ENCODE measurements at regions of chr3 and their contacts with region 1.

Region 1: GRCh38 chr3:171162986-171163723 is 136.6 kb upstream of the SLC2A2 start:
- DNase-seq: peak; percentile 25
- ATAC-seq: no peak
- H3K4me3 Mint-ChIP-seq: no peak overlapping the region
- H3K27ac Mint-ChIP-seq: no peak overlapping the region
- H3K4me1 Mint-ChIP-seq: peaks cover 28% of the 10 kb centered on the region
- H3K27me3 Mint-ChIP-seq: no peaks in the 10 kb centered on the region

Region 2: DNA sequence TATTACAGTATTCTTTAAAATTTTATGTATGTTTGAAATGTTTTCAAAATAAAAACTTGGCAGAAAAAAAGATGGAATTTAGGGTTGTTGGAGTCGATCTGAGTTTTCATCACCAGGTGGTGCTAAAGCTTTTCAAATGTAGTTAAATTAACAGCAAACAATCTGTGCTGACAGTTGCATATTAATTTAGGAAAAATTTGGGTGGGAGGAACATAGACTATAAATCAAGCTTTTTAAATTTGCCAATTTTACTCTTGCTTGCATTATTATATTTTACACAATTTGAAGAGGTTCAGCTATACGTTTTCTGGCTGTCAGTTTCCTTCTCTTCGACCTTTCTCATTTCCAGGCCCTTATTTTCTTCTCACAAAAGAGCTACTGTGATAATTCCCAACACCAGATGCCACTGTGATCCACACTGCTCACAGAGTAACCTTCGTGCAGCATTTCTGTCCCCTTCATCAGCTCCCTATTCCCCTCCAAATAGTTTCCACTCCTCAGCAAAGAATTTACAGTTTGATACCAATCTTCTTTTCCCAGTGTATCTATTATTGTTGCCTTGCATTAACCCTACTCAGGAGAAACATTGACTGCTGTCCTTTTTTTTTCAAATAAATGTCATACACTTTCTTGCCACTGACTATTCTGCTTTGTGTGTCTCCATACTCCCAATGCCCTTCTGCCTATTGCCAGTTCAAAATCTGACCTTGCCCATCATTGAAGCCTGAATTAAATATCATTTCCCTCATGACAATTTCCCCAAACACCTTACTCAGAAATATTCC is 201.3 kb before region 1 on chr3:
- CTCF ChIA-PET with region 1: interaction called, 3 read pairs
- POLR2A ChIA-PET with region 1: no interaction called
- intact Hi-C with region 1: loop called in 1 of 2 experiments (anchors 5 kb)
- DNase-seq: peak; percentile 7
- ATAC-seq: no peak
- H3K4me3 Mint-ChIP-seq: no peak overlapping the region
- H3K27ac Mint-ChIP-seq: no peak overlapping the region
- H3K4me1 Mint-ChIP-seq: no peaks in the 10 kb centered on the region
- H3K27me3 Mint-ChIP-seq: peaks cover 2% of the 10 kb centered on the region

Region 3: DNA sequence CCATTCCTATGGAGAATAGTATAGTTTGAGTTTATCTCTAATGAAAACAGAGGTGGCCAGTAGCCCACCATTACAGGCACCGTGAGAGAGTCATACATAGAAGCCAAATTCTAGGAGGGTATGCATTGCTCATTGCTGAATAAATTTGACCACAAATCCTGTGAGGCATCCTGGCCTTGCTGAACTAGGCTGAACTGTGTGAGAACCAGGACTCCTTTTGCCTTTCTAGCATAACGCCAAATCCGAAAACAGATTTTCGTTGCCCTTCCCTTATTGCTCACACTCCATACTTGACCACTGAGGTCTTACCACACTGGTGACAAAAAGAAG is 187.0 kb before region 1 on chr3:
- CTCF ChIA-PET with region 1: no interaction called
- POLR2A ChIA-PET with region 1: no interaction called
- intact Hi-C with region 1: no loop called
- DNase-seq: no peak
- ATAC-seq: no peak
- H3K4me3 Mint-ChIP-seq: no peak overlapping the region
- H3K27ac Mint-ChIP-seq: no peak overlapping the region
- H3K4me1 Mint-ChIP-seq: no peaks in the 10 kb centered on the region
- H3K27me3 Mint-ChIP-seq: peaks cover 19% of the 10 kb centered on the region

Region 4: DNA sequence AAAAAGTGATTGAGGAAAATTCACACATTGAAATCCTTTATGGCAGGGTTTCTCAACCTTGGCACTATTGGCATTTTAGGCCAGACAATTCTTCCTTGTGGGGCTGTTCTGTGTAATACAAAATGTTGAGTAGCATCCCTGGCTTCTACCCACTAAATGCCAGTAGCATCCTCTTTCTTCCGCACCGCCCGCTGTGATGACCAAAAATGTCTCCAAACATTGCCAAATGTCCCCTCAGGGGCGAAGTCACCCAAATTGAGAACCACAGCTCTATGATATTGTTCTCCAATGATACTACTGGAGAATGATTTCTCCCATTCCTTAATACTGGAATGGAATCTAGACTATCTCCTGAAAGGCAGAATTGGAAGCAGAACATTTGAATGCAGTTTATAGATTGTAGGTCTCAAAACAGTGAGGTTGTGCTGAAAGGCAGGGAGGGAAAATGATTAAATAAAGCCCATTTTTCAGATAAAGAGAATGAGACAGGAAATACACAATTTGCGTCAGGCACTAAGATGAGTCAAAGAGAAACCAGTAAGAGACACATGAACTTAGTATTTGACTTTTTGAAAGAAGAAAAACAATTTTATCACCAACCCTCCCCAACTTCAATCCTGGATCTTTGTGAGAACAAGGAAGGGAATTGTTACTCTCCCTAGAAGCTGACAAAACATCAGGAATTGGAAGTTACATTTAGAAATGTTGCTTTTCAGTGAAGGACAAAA is 398.6 kb after region 1 on chr3:
- CTCF ChIA-PET with region 1: interaction called, 22 read pairs
- POLR2A ChIA-PET with region 1: no interaction called
- intact Hi-C with region 1: no loop called
- DNase-seq: peak; percentile 17
- ATAC-seq: peak; percentile 73
- H3K4me3 Mint-ChIP-seq: peak overlapping the region; percentile 58
- H3K27ac Mint-ChIP-seq: peak overlapping the region; percentile 94
- H3K4me1 Mint-ChIP-seq: peaks cover 36% of the 10 kb centered on the region
- H3K27me3 Mint-ChIP-seq: no peaks in the 10 kb centered on the region

Region 5: GRCh38 chr3:171729452-171730334 is 566.5 kb after region 1 on chr3:
- CTCF ChIA-PET with region 1: no interaction called
- POLR2A ChIA-PET with region 1: no interaction called
- intact Hi-C with region 1: no loop called
- DNase-seq: no peak
- ATAC-seq: no peak
- H3K4me3 Mint-ChIP-seq: no peak overlapping the region
- H3K27ac Mint-ChIP-seq: no peak overlapping the region
- H3K4me1 Mint-ChIP-seq: no peaks in the 10 kb centered on the region
- H3K27me3 Mint-ChIP-seq: peaks cover 2% of the 10 kb centered on the region